Cardiac septum (tissue), 1 donor: ENCODE measurements at regions of chr10 and their contacts with region 1.

Region 1: DNA sequence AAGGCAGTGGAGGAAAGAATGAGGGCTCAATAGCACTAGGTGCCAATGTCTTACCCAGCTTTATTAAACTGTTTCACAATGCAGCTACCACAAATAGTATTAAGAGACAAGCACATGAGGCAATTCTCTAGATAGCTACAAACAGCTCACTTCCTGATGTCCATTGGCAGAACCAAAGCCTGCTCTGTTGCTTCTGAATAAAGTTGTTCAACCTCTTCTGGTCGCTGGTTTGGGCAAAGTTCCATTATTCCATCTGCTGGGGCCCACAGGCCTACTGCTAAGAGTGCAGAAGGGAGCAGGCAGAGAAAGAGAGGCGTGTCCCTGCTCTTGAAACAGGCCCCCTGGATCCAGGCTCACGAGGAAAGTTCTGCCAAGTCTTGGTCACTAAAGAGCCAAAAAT is 173.9 kb downstream of the ZNF438 start:
- DNase-seq: peak; percentile 80

Region 2: DNA sequence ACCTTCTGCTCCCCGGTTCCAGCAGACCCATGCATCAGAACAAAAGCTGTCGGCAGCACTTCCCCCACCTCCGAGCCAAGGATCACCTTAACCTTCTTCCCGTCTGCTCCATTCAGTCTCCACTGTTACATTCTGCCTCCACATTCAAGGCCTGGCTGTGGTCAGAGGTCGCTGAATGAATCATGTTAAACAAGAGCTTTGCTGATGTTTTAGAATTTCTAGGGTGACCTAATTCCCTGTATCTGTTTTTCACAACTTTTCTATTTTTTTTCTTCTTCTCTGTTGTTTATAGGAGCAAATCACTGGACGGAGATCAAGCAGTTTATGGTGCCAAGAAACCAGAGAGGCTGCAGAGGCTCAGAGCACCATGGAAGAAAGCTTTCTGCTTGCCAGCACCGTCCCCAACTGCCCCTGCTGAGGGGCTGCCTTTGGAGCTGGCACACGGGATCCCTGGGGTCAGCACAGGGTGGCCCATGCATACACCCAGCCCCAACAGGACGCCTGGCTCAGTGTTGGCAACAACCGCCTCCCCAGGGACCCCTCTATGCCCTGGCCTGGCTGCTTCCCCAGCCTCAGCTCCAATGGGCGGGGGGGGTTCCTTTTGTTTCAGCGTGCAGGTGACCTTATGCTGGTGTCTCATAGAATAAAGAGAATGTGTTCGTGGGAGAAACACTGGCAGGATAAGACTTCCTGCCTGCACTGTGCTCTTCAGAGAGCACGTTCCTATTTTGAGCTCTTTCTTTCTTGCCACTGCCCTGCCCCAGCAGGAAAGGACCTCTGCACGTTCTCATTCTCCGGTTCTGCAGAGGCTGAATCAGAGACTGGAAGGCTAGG is 45.6 kb before region 1 on chr10:
- intact Hi-C with region 1: loop called (anchors 5 kb)
- DNase-seq: no peak

Region 3: DNA sequence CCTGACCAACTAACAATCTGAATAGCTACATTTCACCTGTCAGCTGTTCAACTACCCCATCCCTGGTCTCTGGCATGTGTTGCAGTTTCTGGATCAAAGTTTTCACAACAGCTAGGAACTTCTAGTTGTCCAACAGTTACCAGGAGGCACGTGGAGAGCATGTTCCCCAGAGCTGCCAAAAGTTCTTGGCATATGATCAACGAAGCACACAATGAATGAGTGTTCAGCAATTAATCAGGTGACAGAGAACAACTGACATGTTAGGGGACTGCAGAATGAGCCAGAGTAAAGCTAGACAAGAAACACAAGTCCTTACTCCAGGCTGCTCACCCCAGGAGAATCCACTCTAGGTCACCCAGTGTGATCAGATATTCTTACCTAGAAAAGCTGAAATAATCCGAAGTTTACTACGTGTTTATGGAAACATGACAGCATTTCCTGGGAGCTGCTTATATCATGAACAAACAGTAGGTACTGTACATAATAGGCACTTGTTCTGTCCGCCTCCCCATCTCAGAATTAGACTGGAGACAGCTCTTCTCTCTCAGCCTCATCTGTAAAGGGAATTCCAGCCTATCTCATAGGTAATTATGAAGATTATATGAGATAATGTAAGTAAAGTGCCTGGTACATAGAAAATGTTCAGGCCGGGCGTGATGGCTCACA is 123.3 kb after region 1 on chr10:
- intact Hi-C with region 1: no loop called
- DNase-seq: no peak

Region 4: GRCh38 chr10:30999070-30999712 is 141.4 kb after region 1 on chr10:
- intact Hi-C with region 1: no loop called
- DNase-seq: no peak